PC-9 (cell line): ENCODE measurements at regions of chr14 and their contacts with region 1.

Region 1: DNA sequence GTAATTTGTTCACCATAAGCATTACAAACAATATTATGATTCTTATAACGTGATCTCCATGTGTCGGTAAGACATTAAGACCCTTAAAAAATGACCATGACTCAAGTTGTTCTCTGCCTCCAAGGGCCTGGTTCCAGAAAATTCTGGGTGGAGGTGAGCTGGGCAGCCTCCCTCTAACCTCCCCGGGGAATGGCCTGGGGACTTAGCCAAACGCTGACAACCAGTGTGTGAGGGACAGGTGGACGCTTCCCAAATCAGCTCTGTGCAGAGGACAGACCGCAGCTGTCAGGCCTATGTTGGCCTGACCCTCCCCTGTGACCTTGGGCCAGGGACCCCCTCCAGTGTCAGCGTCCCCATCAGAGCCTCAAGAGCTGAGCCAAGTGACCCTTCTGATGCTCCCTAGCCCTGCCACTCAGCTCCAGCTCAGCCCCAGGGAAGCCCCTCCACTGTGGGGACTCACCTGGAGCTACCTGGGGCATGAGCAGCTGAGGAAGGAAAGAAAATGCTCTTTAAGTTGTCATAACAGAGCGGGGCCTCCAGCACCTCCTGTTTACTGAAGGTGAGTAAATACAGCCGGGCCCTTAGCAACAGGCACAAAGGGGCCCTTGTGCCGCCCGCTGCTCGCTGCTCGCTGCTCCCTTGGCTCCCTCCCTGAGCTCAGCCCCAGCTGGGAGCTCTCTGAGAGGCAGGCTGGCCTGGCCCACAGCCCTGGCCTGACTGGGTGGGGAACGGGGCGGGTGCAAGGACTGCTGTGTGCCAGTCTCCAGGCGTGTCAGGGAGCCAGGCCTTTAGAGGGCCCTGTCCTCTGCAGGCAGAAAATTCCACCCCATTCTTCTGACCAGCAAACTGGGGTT is 116.6 kb downstream of the CALM1 start:
- DNase-seq: peak; percentile 59 to 85
- H3K4me3 ChIP-seq: no peak overlapping the region
- H3K27ac ChIP-seq: no peak overlapping the region
- H3K4me1 ChIP-seq: peaks cover 65% of the 10 kb centered on the region
- H3K27me3 ChIP-seq: no peaks in the 10 kb centered on the region
- CTCF ChIP-seq: no peak

Region 2: DNA sequence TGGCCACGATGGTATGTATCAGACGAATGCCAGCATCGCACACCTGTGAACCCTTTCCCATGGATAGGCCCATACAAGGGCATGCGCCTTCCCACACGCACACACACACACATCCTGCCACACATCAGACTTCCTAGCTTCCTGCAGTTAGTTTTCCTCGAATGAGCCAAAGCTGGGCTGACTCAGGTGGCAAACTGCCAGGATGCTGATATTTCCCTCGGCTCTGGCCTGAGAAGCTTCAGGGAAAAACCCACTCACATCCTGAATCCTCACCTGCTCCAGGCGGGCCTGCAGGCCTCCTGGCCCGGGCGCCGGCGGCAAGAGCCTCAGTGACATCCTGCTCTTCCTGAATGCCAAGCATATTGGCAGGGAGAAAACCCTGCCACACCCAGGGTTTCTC is 94.2 kb before region 1 on chr14:
- CTCF ChIA-PET with region 1: no interaction called
- POLR2A ChIA-PET with region 1: no interaction called
- intact Hi-C with region 1: no loop called
- DNase-seq: peak; percentile 66 to 88
- H3K4me3 ChIP-seq: no peak overlapping the region
- H3K27ac ChIP-seq: peak overlapping the region; percentile 59
- H3K4me1 ChIP-seq: peaks cover 15% of the 10 kb centered on the region
- H3K27me3 ChIP-seq: no peaks in the 10 kb centered on the region
- CTCF ChIP-seq: no peak

Region 3: GRCh38 chr14:90495357-90496276 is 17.8 kb before region 1 on chr14:
- CTCF ChIA-PET with region 1: no interaction called
- POLR2A ChIA-PET with region 1: no interaction called
- intact Hi-C with region 1: loop called (anchors 1 kb)
- DNase-seq: no peak
- H3K4me3 ChIP-seq: no peak overlapping the region
- H3K27ac ChIP-seq: no peak overlapping the region
- H3K4me1 ChIP-seq: no peaks in the 10 kb centered on the region
- H3K27me3 ChIP-seq: no peaks in the 10 kb centered on the region
- CTCF ChIP-seq: no peak

Region 4: DNA sequence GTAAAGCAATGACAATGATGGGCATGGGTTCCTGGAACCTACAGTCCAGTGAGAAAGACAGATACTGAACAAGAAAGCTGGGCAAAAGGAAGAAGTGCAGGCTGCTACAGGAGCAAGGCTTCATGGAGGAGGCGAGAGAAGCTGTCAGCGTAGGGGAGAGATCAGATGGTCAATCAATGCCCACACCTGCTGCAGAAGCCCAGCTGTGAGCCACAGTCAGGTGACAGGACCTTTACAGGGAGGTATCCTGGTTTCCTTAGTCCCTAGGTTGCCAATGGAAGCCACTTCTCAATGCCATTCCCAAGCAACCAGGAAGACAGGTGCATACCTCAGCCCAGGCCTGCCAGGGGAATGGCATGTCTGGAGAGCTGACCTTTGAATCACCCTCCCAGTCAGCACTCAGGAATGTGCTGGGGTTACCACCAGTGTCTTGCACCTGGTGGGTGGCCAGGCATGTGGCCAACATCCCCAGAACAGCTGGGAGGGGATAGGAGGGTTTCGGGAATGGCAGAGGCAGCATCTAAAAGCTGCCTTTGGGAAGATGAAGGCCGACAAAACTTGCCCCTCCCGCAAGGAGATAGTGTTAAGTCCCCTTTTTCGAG is 132.6 kb after region 1 on chr14:
- CTCF ChIA-PET with region 1: no interaction called
- POLR2A ChIA-PET with region 1: interaction called, 4 read pairs
- intact Hi-C with region 1: loop called (anchors 5 kb)
- DNase-seq: peak; percentile 75 to 94
- H3K4me3 ChIP-seq: no peak overlapping the region
- H3K27ac ChIP-seq: peak overlapping the region; percentile 36; the same call in 1 of the 2 replicates
- H3K4me1 ChIP-seq: peaks cover 31% of the 10 kb centered on the region
- H3K27me3 ChIP-seq: no peaks in the 10 kb centered on the region
- CTCF ChIP-seq: no peak